ENCODE measurements at regions of chr15 and their contacts with region 1.

Region 1: DNA sequence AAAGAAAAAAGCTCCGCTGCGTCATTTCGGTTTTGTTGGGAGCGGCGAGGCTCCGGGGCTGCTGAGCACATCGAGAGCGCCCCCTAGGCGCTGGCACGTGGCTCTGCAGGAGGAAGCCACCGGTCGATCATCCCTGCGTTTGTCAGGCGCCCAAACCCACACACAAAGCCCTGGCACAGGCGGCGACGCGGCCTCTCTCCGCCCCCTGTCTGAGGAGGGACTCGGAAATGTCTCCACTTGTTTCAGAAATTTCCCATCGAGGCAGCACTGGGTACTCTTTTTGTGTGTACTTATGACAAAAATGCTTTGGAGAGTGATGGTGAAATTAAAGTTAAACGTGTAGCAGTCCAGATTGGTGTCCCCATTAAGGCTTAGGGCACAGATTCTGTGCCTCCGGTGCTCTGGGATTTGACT is 407.3 kb upstream of the ONECUT1 start:
- DNase-seq: no peak
- H3K4me3 ChIP-seq: no peak overlapping the region
- H3K27ac ChIP-seq: no peak overlapping the region
- H3K4me1 ChIP-seq: no peaks in the 10 kb centered on the region
- H3K27me3 ChIP-seq: peaks cover 4% of the 10 kb centered on the region
- CTCF ChIP-seq: peak; percentile 84 to 98 (median 87)

Region 2: GRCh38 chr15:52780172-52780980 is 417.1 kb before region 1 on chr15:
- dilution Hi-C with region 1: loop called (anchors 25 kb)
- DNase-seq: no peak
- H3K4me3 ChIP-seq: no peak overlapping the region
- H3K27ac ChIP-seq: no peak overlapping the region
- H3K4me1 ChIP-seq: no peaks in the 10 kb centered on the region
- H3K27me3 ChIP-seq: peaks cover 46% of the 10 kb centered on the region
- CTCF ChIP-seq: peak; percentile 81 to 96 (median 82)

Measured in keratinocyte (primary cell).